AG04450 (cell line): ENCODE measurements at regions of chr1 and their contacts with region 1.

Region 1: GRCh38 chr1:2227346-2228153 is 569 bp upstream of the SKI start:
- DNase-seq: peak; percentile 92
- H3K4me3 ChIP-seq: peak overlapping the region; percentile 82
- H3K27ac ChIP-seq: peak overlapping the region; percentile 89
- H3K27me3 ChIP-seq: no peaks in the 10 kb centered on the region
- CTCF ChIP-seq: no peak

Region 2: DNA sequence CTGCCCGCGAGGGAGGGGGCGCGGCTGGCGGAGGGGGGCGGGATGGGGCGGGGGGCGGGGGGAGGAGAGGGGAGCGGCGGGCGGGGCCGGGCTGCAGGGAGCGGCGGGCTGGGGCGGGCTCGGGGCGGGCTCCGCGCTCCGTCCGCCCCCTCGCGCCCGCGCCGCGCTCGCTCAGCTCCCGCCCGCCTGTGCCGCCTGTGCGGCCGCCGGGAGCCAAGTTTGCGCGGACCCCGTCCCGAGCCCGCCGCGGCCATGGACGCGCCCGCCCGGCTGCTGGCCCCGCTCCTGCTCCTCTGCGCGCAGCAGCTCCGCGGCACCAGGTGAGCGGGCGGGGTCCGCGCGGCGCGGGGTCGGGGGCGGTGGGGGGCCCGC is 208.4 kb before region 1 on chr1 and contains the start of gene GABRD:
- CTCF ChIA-PET with region 1: no interaction called
- POLR2A ChIA-PET with region 1: no interaction called
- DNase-seq: no peak
- H3K4me3 ChIP-seq: no peak within 1 kb of the TSS
- H3K27ac ChIP-seq: no peak within 1 kb of the TSS
- H3K27me3 ChIP-seq: peaks cover 67% of the 10 kb centered on the region
- CTCF ChIP-seq: no peak
- polyA plus RNA-seq, gene GABRD: not detected in 2 replicates

Region 3: DNA sequence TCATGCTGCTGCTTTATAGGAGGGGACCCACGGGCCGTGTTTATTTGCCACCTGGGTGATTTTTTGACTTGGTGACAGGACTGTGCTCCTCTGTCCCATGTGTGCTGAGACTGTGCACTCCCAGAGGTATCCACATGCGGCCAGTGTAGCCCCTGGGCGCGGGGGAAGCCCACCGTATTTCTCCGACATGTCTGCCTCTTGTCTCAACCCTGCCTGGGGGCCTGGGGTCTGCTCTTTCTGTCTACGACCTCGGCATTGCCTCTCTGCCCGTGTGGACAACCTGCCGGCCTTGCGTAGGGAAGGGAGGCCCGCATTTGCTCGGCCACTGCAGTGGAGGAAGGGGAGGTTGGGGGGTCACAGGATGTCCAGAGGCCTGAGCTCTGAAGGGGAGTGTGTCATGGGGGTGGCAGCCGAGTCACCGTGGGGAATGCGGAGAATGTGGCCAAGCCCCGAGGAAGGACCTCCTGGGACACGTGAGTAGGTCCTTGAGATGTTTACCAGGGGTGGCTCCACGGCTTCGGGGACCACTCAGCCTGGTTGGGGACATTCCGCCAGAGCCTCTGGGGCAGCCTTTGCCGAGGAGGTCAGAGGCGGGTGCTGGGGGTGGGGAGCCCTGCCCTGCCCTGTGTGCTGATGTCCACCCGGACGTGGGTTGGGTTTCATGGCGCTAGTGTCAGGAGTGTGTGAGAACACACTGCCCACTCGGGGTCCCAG is 166.3 kb before region 1 on chr1:
- CTCF ChIA-PET with region 1: no interaction called
- POLR2A ChIA-PET with region 1: no interaction called
- DNase-seq: no peak
- H3K4me3 ChIP-seq: no peak overlapping the region
- H3K27ac ChIP-seq: no peak overlapping the region
- H3K27me3 ChIP-seq: peaks cover 2% of the 10 kb centered on the region
- CTCF ChIP-seq: no peak

Region 4: GRCh38 chr1:2151252-2151651 is 76.3 kb before region 1 on chr1:
- CTCF ChIA-PET with region 1: no interaction called
- POLR2A ChIA-PET with region 1: no interaction called
- DNase-seq: no peak
- H3K4me3 ChIP-seq: no peak overlapping the region
- H3K27ac ChIP-seq: no peak overlapping the region
- H3K27me3 ChIP-seq: peaks cover 2% of the 10 kb centered on the region
- CTCF ChIP-seq: no peak

Region 5: GRCh38 chr1:2205191-2205952 is 22.2 kb before region 1 on chr1:
- CTCF ChIA-PET with region 1: no interaction called
- POLR2A ChIA-PET with region 1: interaction called, 10 read pairs
- DNase-seq: peak; percentile 81
- H3K4me3 ChIP-seq: peak overlapping the region; percentile 50
- H3K27ac ChIP-seq: no peak overlapping the region
- H3K27me3 ChIP-seq: no peaks in the 10 kb centered on the region
- CTCF ChIP-seq: no peak

Region 6: DNA sequence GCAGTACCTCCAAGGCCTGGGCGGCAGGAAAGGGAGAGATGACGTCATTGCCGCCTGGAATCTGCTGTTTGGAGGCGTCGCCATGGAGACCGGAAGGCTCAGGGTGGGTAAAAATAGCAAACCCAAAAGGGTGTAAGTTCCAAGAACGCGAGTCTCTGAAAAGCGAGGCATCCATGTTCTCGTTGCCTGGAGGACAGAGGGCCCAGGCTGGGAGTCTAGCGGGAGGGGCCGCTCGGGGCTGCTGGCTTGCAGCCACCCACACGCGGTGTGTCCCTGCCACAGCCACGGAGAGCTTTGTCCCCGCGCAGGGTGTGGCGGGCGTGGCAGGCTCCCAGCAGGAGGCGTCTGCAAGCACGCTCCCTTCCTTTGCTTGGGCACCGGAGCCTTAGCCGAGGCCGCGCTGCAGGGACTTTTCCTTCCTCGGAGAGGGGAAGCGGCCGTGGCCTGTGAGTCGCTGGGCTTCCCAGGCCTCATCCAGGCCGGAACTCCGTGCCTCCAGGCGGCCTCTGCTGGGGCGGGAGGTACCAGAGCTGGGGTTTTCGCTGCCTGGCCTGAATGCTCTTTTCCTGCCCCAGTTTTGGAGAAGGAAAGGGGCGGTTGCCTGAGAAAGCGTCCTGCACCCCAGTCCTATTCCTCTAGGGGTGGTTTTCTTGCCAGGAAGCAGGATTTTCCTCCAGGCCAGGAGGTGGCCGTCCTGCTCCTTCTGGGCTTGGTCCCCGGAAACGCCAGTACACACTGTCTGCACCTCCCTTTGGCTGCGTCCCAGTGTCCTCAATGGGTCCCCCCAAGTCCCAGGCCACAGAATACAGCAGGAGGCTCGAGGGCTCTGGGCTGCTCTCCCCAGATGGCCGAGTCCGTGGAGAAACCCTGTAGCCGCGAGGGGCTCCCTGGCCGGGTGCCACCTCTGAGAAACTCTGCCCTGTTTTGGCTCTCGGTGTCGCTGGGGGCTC is 14.7 kb before region 1 on chr1:
- CTCF ChIA-PET with region 1: interaction called, 3 read pairs
- POLR2A ChIA-PET with region 1: interaction called, 19 read pairs
- DNase-seq: peak; percentile 90
- H3K4me3 ChIP-seq: peak overlapping the region; percentile 44
- H3K27ac ChIP-seq: peak overlapping the region; percentile 98
- H3K27me3 ChIP-seq: no peaks in the 10 kb centered on the region
- CTCF ChIP-seq: no peak; the same call in none of the 2 replicates

Region 7: DNA sequence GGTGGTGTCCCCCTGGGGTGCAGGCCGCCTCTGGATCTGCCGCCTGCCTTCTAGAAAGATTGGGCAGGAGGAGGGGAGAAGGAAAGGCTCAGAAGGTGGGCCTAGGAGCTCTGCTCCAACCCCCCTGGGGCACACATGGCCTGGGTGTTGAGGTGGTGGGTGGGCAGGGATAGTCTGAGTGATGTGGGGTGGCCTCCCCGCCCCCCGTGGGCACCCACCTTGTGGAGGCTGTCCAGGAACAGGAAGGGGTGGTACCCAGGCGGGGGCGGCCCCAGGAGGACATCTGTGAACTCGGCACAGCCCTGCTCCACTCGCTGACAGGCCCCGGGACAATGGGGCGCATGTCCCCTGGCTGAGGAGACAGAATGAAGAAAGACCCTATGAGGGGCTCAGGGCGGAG is 108.9 kb after region 1 on chr1:
- CTCF ChIA-PET with region 1: no interaction called
- POLR2A ChIA-PET with region 1: no interaction called
- DNase-seq: no peak
- H3K4me3 ChIP-seq: no peak overlapping the region
- H3K27ac ChIP-seq: no peak overlapping the region
- H3K27me3 ChIP-seq: peaks cover 4% of the 10 kb centered on the region
- CTCF ChIP-seq: no peak